GM12878 (cell line): ENCODE measurements at regions of chr10 and their contacts with region 1.

Region 1: DNA sequence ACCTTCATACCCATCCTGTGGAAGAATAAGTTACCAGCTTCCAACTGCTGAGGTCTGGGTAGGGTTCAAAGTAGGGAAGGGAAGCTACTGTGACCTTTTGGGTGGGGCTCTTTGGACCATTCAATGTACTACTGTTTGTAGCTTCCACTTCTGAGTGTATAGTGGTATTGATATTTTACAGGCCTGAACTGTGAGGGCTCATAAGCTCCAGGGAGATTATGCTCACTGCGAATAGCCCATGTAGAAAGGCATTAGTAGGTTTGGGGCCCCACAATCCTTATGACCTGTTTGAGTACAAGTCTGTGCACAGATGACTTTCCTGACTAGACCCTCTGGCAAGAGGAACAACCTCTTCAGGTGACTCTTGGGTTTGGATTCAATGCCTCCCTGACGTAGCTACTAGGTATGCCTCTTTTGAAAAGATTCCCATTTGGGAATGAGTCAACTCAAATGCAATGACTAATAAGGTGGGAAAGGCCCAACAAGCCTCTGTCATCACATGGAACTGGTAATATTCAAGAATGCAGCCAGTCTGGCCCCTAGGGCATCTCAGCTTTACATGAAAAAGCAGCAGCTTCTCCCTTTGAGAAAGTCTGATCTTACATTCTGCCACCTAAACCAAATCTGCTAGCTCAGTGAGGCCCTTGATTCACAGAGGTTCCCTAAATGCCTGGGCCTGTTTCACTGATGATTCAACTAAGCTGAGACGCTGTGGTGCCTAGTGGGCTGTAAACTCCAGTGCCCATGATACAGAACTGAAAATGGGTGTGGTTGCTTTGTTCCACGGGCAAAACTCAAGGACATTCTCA is 79.8 kb downstream of the ABI1 start:
- DNase-seq: peak; percentile 69
- ATAC-seq: peak; percentile 88
- H3K4me3 ChIP-seq: peak overlapping the region; percentile 13; the same call in 1 of the 2 replicates
- H3K27ac ChIP-seq: peak overlapping the region; percentile 58
- H3K4me1 ChIP-seq: peaks cover 34% of the 10 kb centered on the region
- H3K27me3 ChIP-seq: no peaks in the 10 kb centered on the region
- CTCF ChIP-seq: no peak
- EP300 ChIP-seq: no peak
- POLR2A ChIP-seq: 0 out of 2 replicates have a peak, but pooled peaks have one; percentile 9
- RAD21 ChIP-seq: no peak

Region 2: GRCh38 chr10:26755443-26755903 is 25.5 kb before region 1 on chr10:
- CTCF ChIA-PET with region 1: interaction called, 4 read pairs
- POLR2A ChIA-PET with region 1: interaction called, 7 read pairs
- RAD21 ChIA-PET with region 1: interaction called, 9 read pairs
- SMC1A ChIA-PET with region 1: interaction called, 12 read pairs
- in situ Hi-C with region 1: no loop called
- intact Hi-C with region 1: no loop called
- DNase-seq: peak; percentile 67
- ATAC-seq: peak; percentile 98
- H3K4me3 ChIP-seq: peak overlapping the region; percentile 55; the same call in 1 of the 2 replicates
- H3K27ac ChIP-seq: peak overlapping the region; percentile 49
- H3K4me1 ChIP-seq: peaks cover 9% of the 10 kb centered on the region; the same call in 1 of the 2 replicates
- H3K27me3 ChIP-seq: no peaks in the 10 kb centered on the region
- CTCF ChIP-seq: no peak
- EP300 ChIP-seq: peak in 1 of 2 experiments; percentile 22; a peak in 1 of 4 replicates
- POLR2A ChIP-seq: no peak
- RAD21 ChIP-seq: no peak

Region 3: GRCh38 chr10:26770069-26770468 is 10.9 kb before region 1 on chr10:
- CTCF ChIA-PET with region 1: interaction called, 5 read pairs
- POLR2A ChIA-PET with region 1: interaction called, 9 read pairs
- RAD21 ChIA-PET with region 1: interaction called, 3 read pairs
- SMC1A ChIA-PET with region 1: interaction called, 23 read pairs
- in situ Hi-C with region 1: no loop called
- intact Hi-C with region 1: no loop called
- DNase-seq: no peak
- ATAC-seq: no peak
- H3K4me3 ChIP-seq: no peak overlapping the region
- H3K27ac ChIP-seq: no peak overlapping the region
- H3K4me1 ChIP-seq: no peaks in the 10 kb centered on the region
- H3K27me3 ChIP-seq: no peaks in the 10 kb centered on the region
- CTCF ChIP-seq: no peak
- EP300 ChIP-seq: no peak
- POLR2A ChIP-seq: no peak
- RAD21 ChIP-seq: no peak

Region 4: GRCh38 chr10:26799342-26799741 is 18.3 kb after region 1 on chr10:
- CTCF ChIA-PET with region 1: interaction called, 4 read pairs
- POLR2A ChIA-PET with region 1: no interaction called
- RAD21 ChIA-PET with region 1: interaction called, 10 read pairs
- SMC1A ChIA-PET with region 1: interaction called, 31 read pairs
- in situ Hi-C with region 1: no loop called
- intact Hi-C with region 1: no loop called
- DNase-seq: peak; percentile 60
- ATAC-seq: peak; percentile 54
- H3K4me3 ChIP-seq: no peak overlapping the region
- H3K27ac ChIP-seq: peak overlapping the region; percentile 71
- H3K4me1 ChIP-seq: peaks cover 31% of the 10 kb centered on the region
- H3K27me3 ChIP-seq: no peaks in the 10 kb centered on the region
- CTCF ChIP-seq: no peak
- EP300 ChIP-seq: peak in 1 of 2 experiments; percentile 43; a peak in 1 of 4 replicates
- POLR2A ChIP-seq: no peak
- RAD21 ChIP-seq: no peak

Region 5: DNA sequence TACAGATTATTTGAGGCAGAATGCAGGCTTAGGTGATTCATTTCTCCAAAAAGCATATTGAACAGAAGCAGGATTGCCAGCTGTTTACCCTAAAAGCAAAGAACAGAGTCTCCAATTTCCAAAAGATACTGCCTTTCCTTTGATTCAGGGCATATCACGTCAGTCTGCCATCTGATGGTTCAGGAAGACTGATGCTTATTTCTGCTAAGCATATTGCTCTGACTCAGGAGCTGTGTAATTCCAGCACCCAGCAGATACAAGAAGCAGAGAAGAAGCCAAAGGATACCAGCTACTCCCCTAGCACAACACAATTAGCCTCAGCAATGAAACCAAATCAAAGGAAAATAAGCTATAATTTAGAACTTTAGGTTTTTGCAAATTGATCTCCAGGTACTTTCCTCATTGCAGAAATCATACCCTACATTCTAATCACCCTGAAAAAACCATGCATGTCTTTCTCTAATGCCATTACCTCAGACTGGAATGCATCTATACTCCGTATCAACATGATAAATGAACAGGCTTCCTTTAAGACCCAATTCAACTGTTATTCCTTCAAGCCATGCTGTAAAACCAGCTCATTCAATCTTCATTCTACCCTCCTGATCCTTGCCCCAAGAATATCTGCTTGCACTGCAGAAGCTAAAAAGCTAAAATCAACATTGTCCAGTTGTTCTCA is 24.7 kb after region 1 on chr10:
- CTCF ChIA-PET with region 1: interaction called, 7 read pairs
- POLR2A ChIA-PET with region 1: interaction called, 9 read pairs
- RAD21 ChIA-PET with region 1: interaction called, 7 read pairs
- SMC1A ChIA-PET with region 1: interaction called, 31 read pairs
- in situ Hi-C with region 1: no loop called
- intact Hi-C with region 1: no loop called
- DNase-seq: no peak
- ATAC-seq: peak; percentile 25
- H3K4me3 ChIP-seq: peak overlapping the region; percentile 48; the same call in 1 of the 2 replicates
- H3K27ac ChIP-seq: peak overlapping the region; percentile 35
- H3K4me1 ChIP-seq: peaks cover 35% of the 10 kb centered on the region
- H3K27me3 ChIP-seq: no peaks in the 10 kb centered on the region
- CTCF ChIP-seq: no peak
- EP300 ChIP-seq: no peak
- POLR2A ChIP-seq: no peak
- RAD21 ChIP-seq: no peak